ENCODE measurements at regions of chr12 and their contacts with region 1.

Region 1: GRCh38 chr12:25386831-25387731 is 136.4 kb upstream of the KRAS start:
- DNase-seq: peak; percentile 82
- H3K4me3 ChIP-seq: peak overlapping the region; percentile 82
- H3K27ac ChIP-seq: peak overlapping the region; percentile 100
- H3K27me3 ChIP-seq: no peaks in the 10 kb centered on the region
- CTCF ChIP-seq: peak; percentile 87

Region 2: DNA sequence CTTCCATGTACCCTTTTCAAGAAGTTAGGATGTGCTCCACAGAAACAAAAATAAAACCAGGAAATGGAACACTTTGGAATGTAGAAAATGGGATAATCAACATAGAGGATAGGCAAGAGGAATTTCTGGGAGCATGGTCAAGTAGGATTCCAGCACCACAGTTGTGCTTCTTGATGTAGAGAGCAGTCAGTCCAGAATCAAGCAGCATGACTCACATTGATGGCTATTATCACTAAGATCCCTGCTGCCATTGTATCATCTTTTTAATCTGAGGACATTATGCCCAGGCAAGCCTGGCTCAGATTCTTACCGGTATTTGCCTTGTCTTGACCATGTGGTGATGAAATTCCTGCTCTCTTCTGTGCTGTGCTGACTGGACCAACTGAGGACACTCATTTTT is 186.4 kb before region 1 on chr12:
- CTCF ChIA-PET with region 1: interaction called, 10 read pairs
- POLR2A ChIA-PET with region 1: interaction called, 3 read pairs
- DNase-seq: no peak
- H3K4me3 ChIP-seq: no peak overlapping the region
- H3K27ac ChIP-seq: no peak overlapping the region
- H3K27me3 ChIP-seq: no peaks in the 10 kb centered on the region
- CTCF ChIP-seq: no peak

Region 3: DNA sequence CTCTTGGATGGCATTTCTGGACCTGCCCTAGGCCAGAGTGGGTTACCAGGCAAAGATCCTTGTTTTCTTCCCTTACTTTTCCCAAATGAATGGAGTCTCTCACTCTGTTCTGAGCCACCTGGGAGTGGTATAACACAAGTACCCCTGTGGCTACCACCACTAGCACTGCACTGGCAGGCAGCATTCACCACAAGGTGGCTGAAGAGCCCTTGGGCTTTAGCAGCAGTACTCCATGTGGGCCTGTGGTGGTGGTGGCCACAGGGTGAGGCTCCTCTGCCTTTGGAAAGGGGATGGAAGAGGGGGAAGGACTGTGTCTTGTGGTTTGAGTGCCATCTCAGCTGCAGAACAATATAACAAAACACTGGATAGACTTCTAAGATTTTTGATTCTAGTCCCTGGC is 204.1 kb after region 1 on chr12:
- CTCF ChIA-PET with region 1: no interaction called
- POLR2A ChIA-PET with region 1: no interaction called
- DNase-seq: no peak
- H3K4me3 ChIP-seq: no peak overlapping the region
- H3K27ac ChIP-seq: no peak overlapping the region
- H3K27me3 ChIP-seq: no peaks in the 10 kb centered on the region
- CTCF ChIP-seq: 0 out of 2 replicates have a peak, but pooled peaks have one; percentile 18

Measured in AG04450 (cell line).